B cell (primary cell): ENCODE measurements at regions of chr3 and their contacts with region 1.

Region 1: GRCh38 chr3:114152519-114153151 is 26.2 kb downstream of the DRD3 start:
- DNase-seq: peak; percentile 88
- ATAC-seq: peak; percentile 99
- H3K4me3 ChIP-seq: peak overlapping the region; percentile 15 to 61 (median 48)
- H3K4me3 Mint-ChIP-seq: peak overlapping the region; percentile 72
- H3K27ac ChIP-seq: no peak overlapping the region
- H3K27ac Mint-ChIP-seq: peak overlapping the region; percentile 47
- H3K4me1 ChIP-seq: peaks cover 3 to 7% of the 10 kb centered on the region in 2 donors
- H3K4me1 Mint-ChIP-seq: peaks cover 9% of the 10 kb centered on the region
- H3K27me3 ChIP-seq: no peaks in the 10 kb centered on the region
- H3K27me3 Mint-ChIP-seq: no peaks in the 10 kb centered on the region
- CTCF ChIP-seq: peak; percentile 98

Region 2: DNA sequence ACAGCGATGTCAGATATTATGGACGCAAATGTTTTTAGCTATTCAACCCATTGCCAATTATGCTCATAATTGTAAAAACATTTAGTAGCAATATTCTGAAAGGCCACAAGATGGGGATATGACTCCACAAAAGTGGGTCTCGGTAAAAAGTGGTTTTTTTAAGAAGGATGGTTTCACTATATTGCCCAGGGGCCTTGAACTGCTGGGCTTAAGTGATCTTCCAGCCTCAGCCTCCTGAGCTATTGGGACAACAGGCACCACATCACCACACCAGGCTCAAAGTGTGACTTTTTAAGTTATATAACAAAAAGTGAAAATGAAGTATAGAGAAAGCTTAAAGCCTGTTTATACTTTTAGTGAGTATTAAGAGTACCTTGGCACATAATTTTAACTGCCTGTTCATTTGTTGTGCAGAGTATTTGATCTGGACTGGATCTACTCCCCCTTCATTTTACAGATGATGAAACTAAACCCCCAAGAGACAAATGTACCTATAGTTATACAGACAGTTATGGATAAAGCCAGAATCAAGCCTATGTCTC is 416.0 kb before region 1 on chr3:
- CTCF ChIA-PET with region 1: interaction called, 5 read pairs
- POLR2A ChIA-PET with region 1: no interaction called
- intact Hi-C with region 1: loop called (anchors 2 kb)
- DNase-seq: peak; percentile 80
- ATAC-seq: peak; percentile 85
- H3K4me3 ChIP-seq: no peak overlapping the region
- H3K4me3 Mint-ChIP-seq: no peak overlapping the region
- H3K27ac ChIP-seq: peak overlapping the region in 1 of 2 donors; percentile 32
- H3K27ac Mint-ChIP-seq: peak overlapping the region; percentile 68
- H3K4me1 ChIP-seq: peaks cover 7 to 8% of the 10 kb centered on the region in 2 donors
- H3K4me1 Mint-ChIP-seq: peaks cover 44% of the 10 kb centered on the region
- H3K27me3 ChIP-seq: no peaks in the 10 kb centered on the region
- H3K27me3 Mint-ChIP-seq: no peaks in the 10 kb centered on the region
- CTCF ChIP-seq: peak; percentile 80

Region 3: GRCh38 chr3:113812854-113813253 is 339.8 kb before region 1 on chr3:
- CTCF ChIA-PET with region 1: no interaction called
- POLR2A ChIA-PET with region 1: no interaction called
- intact Hi-C with region 1: no loop called
- DNase-seq: no peak
- ATAC-seq: no peak
- H3K4me3 ChIP-seq: no peak overlapping the region
- H3K4me3 Mint-ChIP-seq: no peak overlapping the region
- H3K27ac ChIP-seq: no peak overlapping the region
- H3K27ac Mint-ChIP-seq: no peak overlapping the region
- H3K4me1 ChIP-seq: no peaks in the 10 kb centered on the region
- H3K4me1 Mint-ChIP-seq: no peaks in the 10 kb centered on the region
- H3K27me3 ChIP-seq: no peaks in the 10 kb centered on the region
- H3K27me3 Mint-ChIP-seq: no peaks in the 10 kb centered on the region
- CTCF ChIP-seq: no peak

Region 4: DNA sequence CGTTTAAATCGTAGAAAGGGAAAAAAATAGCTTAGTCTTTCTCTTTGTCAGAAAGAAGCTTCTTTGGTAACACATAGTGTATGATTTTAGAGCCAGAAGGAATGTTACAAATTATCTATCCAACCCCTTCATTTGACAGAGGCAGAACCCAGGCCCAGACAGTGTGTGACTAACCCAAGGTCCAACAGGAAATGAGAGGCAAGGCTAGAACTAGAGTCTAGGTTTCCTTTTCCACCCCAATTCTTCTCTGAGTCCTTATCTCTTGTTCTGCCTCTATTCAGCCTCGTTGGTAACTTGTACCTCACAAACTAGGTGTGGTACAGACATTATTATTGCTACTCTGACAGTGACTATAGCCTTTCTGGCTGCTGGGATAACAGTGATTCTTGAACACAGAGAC is 56.8 kb before region 1 on chr3:
- CTCF ChIA-PET with region 1: no interaction called
- POLR2A ChIA-PET with region 1: no interaction called
- intact Hi-C with region 1: no loop called
- DNase-seq: no peak
- ATAC-seq: no peak
- H3K4me3 ChIP-seq: no peak overlapping the region
- H3K4me3 Mint-ChIP-seq: no peak overlapping the region
- H3K27ac ChIP-seq: no peak overlapping the region
- H3K27ac Mint-ChIP-seq: no peak overlapping the region
- H3K4me1 ChIP-seq: no peaks in the 10 kb centered on the region
- H3K4me1 Mint-ChIP-seq: no peaks in the 10 kb centered on the region
- H3K27me3 ChIP-seq: no peaks in the 10 kb centered on the region
- H3K27me3 Mint-ChIP-seq: peaks cover 7% of the 10 kb centered on the region
- CTCF ChIP-seq: no peak

Region 5: GRCh38 chr3:114223143-114223542 is 70.5 kb after region 1 on chr3:
- CTCF ChIA-PET with region 1: interaction called, 10 read pairs
- POLR2A ChIA-PET with region 1: no interaction called
- intact Hi-C with region 1: no loop called
- DNase-seq: peak; percentile 63
- ATAC-seq: peak; percentile 58
- H3K4me3 ChIP-seq: no peak overlapping the region
- H3K4me3 Mint-ChIP-seq: no peak overlapping the region
- H3K27ac ChIP-seq: peak overlapping the region; percentile 73 to 80
- H3K27ac Mint-ChIP-seq: peak overlapping the region; percentile 85
- H3K4me1 ChIP-seq: peaks cover 59 to 76% of the 10 kb centered on the region in 2 donors
- H3K4me1 Mint-ChIP-seq: peaks cover 81% of the 10 kb centered on the region
- H3K27me3 ChIP-seq: no peaks in the 10 kb centered on the region
- H3K27me3 Mint-ChIP-seq: no peaks in the 10 kb centered on the region
- CTCF ChIP-seq: no peak

Region 6: DNA sequence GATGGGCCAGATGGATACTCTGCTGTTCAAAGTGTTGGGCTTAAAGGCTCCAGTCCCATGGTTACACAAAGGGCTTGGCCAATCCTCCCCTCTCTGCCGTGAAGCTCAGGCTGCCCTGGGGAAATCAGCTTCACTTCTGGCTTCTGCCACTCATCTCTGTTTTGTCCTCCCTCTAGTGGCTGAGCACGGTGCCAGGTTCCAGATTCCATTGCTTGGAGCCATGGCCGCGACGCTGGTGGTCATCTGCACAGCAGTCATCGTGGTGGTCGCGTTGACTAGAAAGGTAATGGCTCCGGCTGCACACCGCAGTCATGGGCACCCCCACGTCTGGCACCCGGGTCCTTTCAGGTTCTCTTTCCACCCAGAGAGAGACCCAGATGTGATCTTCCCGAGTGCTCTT is 146.8 kb after region 1 on chr3:
- CTCF ChIA-PET with region 1: interaction called, 11 read pairs
- POLR2A ChIA-PET with region 1: no interaction called
- intact Hi-C with region 1: loop called (anchors 1 kb)
- DNase-seq: peak; percentile 42
- ATAC-seq: peak; percentile 62
- H3K4me3 ChIP-seq: no peak overlapping the region
- H3K4me3 Mint-ChIP-seq: no peak overlapping the region
- H3K27ac ChIP-seq: no peak overlapping the region
- H3K27ac Mint-ChIP-seq: peak overlapping the region; percentile 10
- H3K4me1 ChIP-seq: peaks cover 11 to 12% of the 10 kb centered on the region in 2 donors
- H3K4me1 Mint-ChIP-seq: peaks cover 20% of the 10 kb centered on the region
- H3K27me3 ChIP-seq: no peaks in the 10 kb centered on the region
- H3K27me3 Mint-ChIP-seq: no peaks in the 10 kb centered on the region
- CTCF ChIP-seq: peak; percentile 43

Region 7: GRCh38 chr3:114362815-114363214 is 210.2 kb after region 1 on chr3:
- CTCF ChIA-PET with region 1: interaction called, 7 read pairs
- POLR2A ChIA-PET with region 1: no interaction called
- intact Hi-C with region 1: loop called (anchors 1 kb)
- DNase-seq: peak; percentile 13
- ATAC-seq: no peak
- H3K4me3 ChIP-seq: no peak overlapping the region
- H3K4me3 Mint-ChIP-seq: no peak overlapping the region
- H3K27ac ChIP-seq: no peak overlapping the region
- H3K27ac Mint-ChIP-seq: no peak overlapping the region
- H3K4me1 ChIP-seq: no peaks in the 10 kb centered on the region
- H3K4me1 Mint-ChIP-seq: no peaks in the 10 kb centered on the region
- H3K27me3 ChIP-seq: no peaks in the 10 kb centered on the region
- H3K27me3 Mint-ChIP-seq: no peaks in the 10 kb centered on the region
- CTCF ChIP-seq: peak; percentile 51

Region 8: GRCh38 chr3:114582929-114583328 is 430.3 kb after region 1 on chr3:
- CTCF ChIA-PET with region 1: interaction called, 3 read pairs
- POLR2A ChIA-PET with region 1: no interaction called
- intact Hi-C with region 1: loop called (anchors 10 kb)
- DNase-seq: peak; percentile 13
- ATAC-seq: no peak
- H3K4me3 ChIP-seq: no peak overlapping the region
- H3K4me3 Mint-ChIP-seq: peak overlapping the region; percentile 10
- H3K27ac ChIP-seq: no peak overlapping the region
- H3K27ac Mint-ChIP-seq: peak overlapping the region; percentile 46
- H3K4me1 ChIP-seq: no peaks in the 10 kb centered on the region
- H3K4me1 Mint-ChIP-seq: peaks cover 29% of the 10 kb centered on the region
- H3K27me3 ChIP-seq: no peaks in the 10 kb centered on the region
- H3K27me3 Mint-ChIP-seq: no peaks in the 10 kb centered on the region
- CTCF ChIP-seq: no peak